ENCODE measurements at regions of chr9 and their contacts with region 1.

Region 1: GRCh38 chr9:8419596-8420275 is 620.2 kb upstream of the DMAC1 start:
- DNase-seq: no peak
- H3K4me3 Mint-ChIP-seq: no peak overlapping the region
- H3K27ac Mint-ChIP-seq: no peak overlapping the region
- H3K4me1 Mint-ChIP-seq: no peaks in the 10 kb centered on the region
- H3K27me3 Mint-ChIP-seq: peaks cover 9% of the 10 kb centered on the region

Region 2: GRCh38 chr9:8456344-8456743 is 36.6 kb after region 1 on chr9:
- intact Hi-C with region 1: no loop called
- DNase-seq: no peak
- H3K4me3 Mint-ChIP-seq: no peak overlapping the region
- H3K27ac Mint-ChIP-seq: no peak overlapping the region
- H3K4me1 Mint-ChIP-seq: no peaks in the 10 kb centered on the region
- H3K27me3 Mint-ChIP-seq: peaks cover 5% of the 10 kb centered on the region

Region 3: DNA sequence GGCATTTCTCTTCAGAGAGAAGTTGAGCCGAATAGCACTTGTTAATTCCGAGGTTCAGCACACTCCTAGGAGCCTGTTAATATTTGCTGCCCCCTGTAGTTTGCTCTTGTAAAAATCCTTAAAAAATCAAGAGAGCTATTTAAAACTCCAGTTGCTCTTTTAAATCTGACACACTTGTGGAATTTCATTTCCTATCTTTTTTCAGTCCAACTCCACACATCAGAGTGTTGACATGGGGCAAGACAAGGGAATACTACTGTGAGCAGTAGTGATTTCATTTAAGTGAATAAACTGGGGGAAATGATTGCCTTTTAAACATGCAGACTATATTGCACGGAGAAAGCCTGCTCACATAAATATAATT is 476.1 kb after region 1 on chr9:
- intact Hi-C with region 1: loop called (anchors 10 kb)
- DNase-seq: no peak
- H3K4me3 Mint-ChIP-seq: no peak overlapping the region
- H3K27ac Mint-ChIP-seq: no peak overlapping the region
- H3K4me1 Mint-ChIP-seq: no peaks in the 10 kb centered on the region
- H3K27me3 Mint-ChIP-seq: no peaks in the 10 kb centered on the region

Measured in activated T-helper 1 cell treated with anti-CD3 and anti-CD28 coated beads, Interleukin-12 subunit alpha, Interleukin-12 subunit beta, Interleukin-2, Interleukin-4 antibody, amounts not matched to agents 30 ng/mL and 10 ng/mL and 1 ng/mL, durations not matched to agents 14 hours and 24 hours and 36 hours (primary cell).